Activated CD4-positive, alpha-beta memory T cell treated with anti-CD3 and anti-CD28 coated beads for 36 hours (primary cell): ENCODE measurements at regions of chr3 and their contacts with region 1.

Region 1: GRCh38 chr3:150787741-150788370 is 24.9 kb upstream of the SIAH2 start:
- DNase-seq: peak; percentile 90
- H3K4me3 Mint-ChIP-seq: no peak overlapping the region
- H3K27ac Mint-ChIP-seq: peak overlapping the region; percentile 10
- H3K4me1 Mint-ChIP-seq: peaks cover 46% of the 10 kb centered on the region
- H3K27me3 Mint-ChIP-seq: peaks cover 2% of the 10 kb centered on the region

Region 2: DNA sequence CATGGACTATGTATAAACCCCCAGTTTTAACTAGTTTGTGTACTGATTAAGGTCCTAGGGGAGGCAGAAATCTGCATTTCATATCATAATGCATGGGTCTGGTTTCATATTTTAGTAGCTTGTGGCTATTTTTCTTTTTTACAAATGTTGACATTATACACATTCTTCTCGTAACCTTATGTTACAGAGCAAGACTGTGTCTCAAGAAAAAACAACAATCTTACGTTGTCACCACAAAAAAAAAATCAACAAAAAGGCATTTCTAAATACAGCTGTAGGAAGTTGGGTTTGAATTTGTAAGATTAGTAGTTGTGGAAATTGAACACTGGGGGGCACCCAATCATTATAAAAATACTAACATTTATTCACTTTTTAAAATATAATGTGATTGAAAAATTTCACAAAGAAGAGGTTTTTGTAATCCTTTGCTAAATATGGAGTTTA is 259.5 kb before region 1 on chr3:
- CTCF ChIA-PET with region 1: no interaction called
- POLR2A ChIA-PET with region 1: no interaction called
- intact Hi-C with region 1: loop called (anchors 2 kb)
- DNase-seq: no peak
- H3K4me3 Mint-ChIP-seq: no peak overlapping the region
- H3K27ac Mint-ChIP-seq: no peak overlapping the region
- H3K4me1 Mint-ChIP-seq: peaks cover 6% of the 10 kb centered on the region
- H3K27me3 Mint-ChIP-seq: no peaks in the 10 kb centered on the region

Region 3: DNA sequence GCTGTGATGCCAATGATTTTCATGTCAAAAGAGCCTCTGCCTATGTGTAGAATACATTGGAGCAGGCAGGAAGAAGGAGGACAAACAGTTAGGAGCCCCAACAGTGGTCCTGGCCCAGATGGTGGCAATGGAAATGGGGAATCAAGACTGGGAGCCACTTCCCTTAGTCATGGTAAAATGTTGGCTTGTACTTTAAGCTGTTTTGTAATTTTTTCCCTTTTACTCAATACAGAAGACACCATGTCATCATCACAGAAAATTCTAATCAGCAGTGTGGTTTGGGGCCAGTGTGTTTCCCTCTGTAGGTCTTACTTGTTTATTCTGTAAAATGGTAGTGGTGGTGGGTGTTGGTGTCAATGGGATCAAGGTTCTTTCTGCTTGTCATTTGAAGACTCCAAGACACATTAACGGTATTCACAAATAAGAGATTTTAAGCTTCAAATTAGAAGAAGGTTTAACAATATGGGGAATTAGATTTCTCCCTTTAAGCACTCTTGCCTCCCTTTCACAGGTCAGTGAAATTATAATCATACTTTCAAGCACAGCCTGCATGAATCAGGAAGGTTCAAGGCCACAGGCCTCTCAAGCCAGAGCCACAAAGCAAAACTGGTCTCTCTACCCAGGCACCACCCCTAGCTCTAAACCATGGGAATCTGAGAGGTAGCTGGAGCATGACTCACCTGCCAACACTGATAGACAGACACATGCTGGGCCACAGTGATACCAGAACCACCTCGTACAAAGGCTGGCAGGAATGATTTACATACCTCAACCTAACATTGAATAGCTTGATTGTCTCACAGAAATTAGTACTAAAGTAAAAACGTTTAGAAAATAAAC is 49.8 kb before region 1 on chr3:
- CTCF ChIA-PET with region 1: interaction called, 11 read pairs
- POLR2A ChIA-PET with region 1: interaction called, 18 read pairs
- intact Hi-C with region 1: loop called (anchors 1 kb)
- DNase-seq: peak; percentile 79
- H3K4me3 Mint-ChIP-seq: peak overlapping the region; percentile 38
- H3K27ac Mint-ChIP-seq: peak overlapping the region; percentile 99
- H3K4me1 Mint-ChIP-seq: peaks cover 73% of the 10 kb centered on the region
- H3K27me3 Mint-ChIP-seq: no peaks in the 10 kb centered on the region

Region 4: GRCh38 chr3:150870396-150870795 is 82.5 kb after region 1 on chr3:
- CTCF ChIA-PET with region 1: interaction called, 64 read pairs
- POLR2A ChIA-PET with region 1: interaction called, 3 read pairs
- intact Hi-C with region 1: loop called (anchors 1 kb)
- DNase-seq: no peak
- H3K4me3 Mint-ChIP-seq: no peak overlapping the region
- H3K27ac Mint-ChIP-seq: no peak overlapping the region
- H3K4me1 Mint-ChIP-seq: peaks cover 1% of the 10 kb centered on the region
- H3K27me3 Mint-ChIP-seq: peaks cover 14% of the 10 kb centered on the region

Region 5: GRCh38 chr3:151135541-151136337 is 347.9 kb after region 1 on chr3:
- CTCF ChIA-PET with region 1: interaction called, 4 read pairs
- POLR2A ChIA-PET with region 1: interaction called, 5 read pairs
- intact Hi-C with region 1: loop called (anchors 5 kb)
- DNase-seq: peak; percentile 76
- H3K4me3 Mint-ChIP-seq: peak overlapping the region; percentile 4
- H3K27ac Mint-ChIP-seq: peak overlapping the region; percentile 75
- H3K4me1 Mint-ChIP-seq: peaks cover 23% of the 10 kb centered on the region
- H3K27me3 Mint-ChIP-seq: no peaks in the 10 kb centered on the region

Region 6: DNA sequence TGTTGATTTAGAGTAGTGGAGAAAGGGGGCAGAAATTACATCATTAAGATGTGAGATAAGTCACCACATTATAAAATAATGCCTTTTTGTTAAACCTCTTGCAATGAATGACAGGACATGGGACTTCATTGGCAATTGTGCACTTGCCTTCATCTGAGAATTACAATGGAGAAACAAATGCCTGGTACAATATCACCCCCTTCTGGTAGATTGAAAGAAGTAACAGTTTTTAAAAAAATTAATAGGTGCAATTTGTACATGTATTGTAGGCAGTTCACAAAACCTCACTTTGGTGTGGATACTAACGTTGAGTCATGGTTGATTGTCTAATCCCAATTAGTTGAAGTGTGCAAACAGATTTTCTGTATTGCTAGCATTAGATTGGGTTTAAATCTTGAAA is 495.1 kb after region 1 on chr3:
- CTCF ChIA-PET with region 1: no interaction called
- POLR2A ChIA-PET with region 1: no interaction called
- intact Hi-C with region 1: loop called (anchors 5 kb)
- DNase-seq: no peak
- H3K4me3 Mint-ChIP-seq: no peak overlapping the region
- H3K27ac Mint-ChIP-seq: peak overlapping the region; percentile 62
- H3K4me1 Mint-ChIP-seq: peaks cover 32% of the 10 kb centered on the region
- H3K27me3 Mint-ChIP-seq: no peaks in the 10 kb centered on the region